Calu3 (cell line): ENCODE measurements at regions of chr15 and their contacts with region 1.

Region 1: DNA sequence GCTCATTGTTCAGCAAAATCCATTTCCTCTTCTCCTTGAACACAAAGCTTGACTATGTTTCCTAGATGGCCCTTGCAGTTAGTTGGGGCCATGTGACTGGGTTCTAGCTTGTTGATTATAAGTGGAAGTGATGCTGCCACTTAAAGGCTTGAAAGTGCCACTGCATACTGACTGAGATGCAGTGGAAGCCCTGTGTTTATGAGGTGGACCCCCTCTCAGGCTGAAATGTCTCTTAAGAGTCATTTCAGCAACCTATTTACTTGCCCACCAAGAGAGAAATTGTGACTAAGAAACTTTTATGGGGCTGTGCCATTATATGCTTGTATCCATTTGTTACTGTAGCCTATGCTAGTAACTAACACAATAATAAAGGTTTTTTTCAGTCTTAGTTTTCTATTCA is 8.4 kb upstream of the ANP32A start:
- DNase-seq: peak; percentile 15
- H3K4me3 Mint-ChIP-seq: no peak overlapping the region
- H3K27ac Mint-ChIP-seq: no peak overlapping the region
- H3K4me1 Mint-ChIP-seq: no peaks in the 10 kb centered on the region
- H3K27me3 Mint-ChIP-seq: peaks cover 42% of the 10 kb centered on the region
- CTCF ChIP-seq: no peak

Region 2: GRCh38 chr15:68691705-68692104 is 137.4 kb before region 1 on chr15:
- CTCF ChIA-PET with region 1: no interaction called
- intact Hi-C with region 1: no loop called
- DNase-seq: peak; percentile 51
- H3K4me3 Mint-ChIP-seq: no peak overlapping the region
- H3K27ac Mint-ChIP-seq: no peak overlapping the region
- H3K4me1 Mint-ChIP-seq: no peaks in the 10 kb centered on the region
- H3K27me3 Mint-ChIP-seq: peaks cover 54% of the 10 kb centered on the region
- CTCF ChIP-seq: no peak

Region 3: DNA sequence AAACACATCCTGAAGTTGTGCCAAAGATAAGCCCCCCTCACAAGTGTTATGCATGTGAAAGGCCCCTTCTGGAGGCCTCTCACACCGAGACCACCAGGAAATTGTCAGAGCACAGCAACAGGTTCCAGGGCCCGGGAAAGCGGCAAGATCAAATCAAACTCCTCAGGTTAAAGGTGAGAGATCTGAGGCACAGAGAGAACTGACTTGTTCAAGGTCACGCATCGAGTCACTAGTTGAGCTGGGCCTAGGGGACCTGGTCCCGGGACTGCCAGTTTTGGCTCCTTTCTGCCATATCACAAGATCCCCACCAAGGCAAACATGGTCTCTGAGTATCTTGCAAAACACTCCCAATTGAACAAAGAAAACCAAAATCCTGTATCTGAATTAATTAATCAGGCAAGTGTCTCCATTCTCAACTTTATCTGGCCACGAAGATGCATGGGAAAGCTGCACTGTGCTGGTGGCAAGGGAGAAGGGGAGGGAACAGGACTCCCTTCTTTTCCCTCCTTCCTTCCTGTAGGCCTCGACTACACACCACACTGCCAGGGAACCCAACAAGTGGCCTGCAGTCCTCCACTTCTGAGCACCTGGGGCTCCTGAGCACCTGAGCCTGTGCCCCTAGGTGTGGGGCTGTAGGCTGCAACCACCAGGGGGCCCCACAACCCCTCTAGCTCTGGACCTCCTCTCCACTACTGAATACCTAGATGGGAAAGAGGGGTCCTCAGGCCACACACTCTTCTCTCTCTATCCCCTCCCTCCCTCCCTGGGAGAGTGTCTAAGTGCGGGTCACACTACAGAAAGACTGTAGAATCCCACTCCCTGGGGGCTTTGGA is 45.6 kb before region 1 on chr15:
- CTCF ChIA-PET with region 1: interaction called, 8 read pairs
- intact Hi-C with region 1: loop called (anchors 5 kb)
- DNase-seq: peak; percentile 73
- H3K4me3 Mint-ChIP-seq: no peak overlapping the region
- H3K27ac Mint-ChIP-seq: peak overlapping the region; percentile 54
- H3K4me1 Mint-ChIP-seq: no peaks in the 10 kb centered on the region
- H3K27me3 Mint-ChIP-seq: no peaks in the 10 kb centered on the region
- CTCF ChIP-seq: peak; percentile 81